OCI-LY7 (cell line): ENCODE measurements at regions of chr6 and their contacts with region 1.

Region 1: DNA sequence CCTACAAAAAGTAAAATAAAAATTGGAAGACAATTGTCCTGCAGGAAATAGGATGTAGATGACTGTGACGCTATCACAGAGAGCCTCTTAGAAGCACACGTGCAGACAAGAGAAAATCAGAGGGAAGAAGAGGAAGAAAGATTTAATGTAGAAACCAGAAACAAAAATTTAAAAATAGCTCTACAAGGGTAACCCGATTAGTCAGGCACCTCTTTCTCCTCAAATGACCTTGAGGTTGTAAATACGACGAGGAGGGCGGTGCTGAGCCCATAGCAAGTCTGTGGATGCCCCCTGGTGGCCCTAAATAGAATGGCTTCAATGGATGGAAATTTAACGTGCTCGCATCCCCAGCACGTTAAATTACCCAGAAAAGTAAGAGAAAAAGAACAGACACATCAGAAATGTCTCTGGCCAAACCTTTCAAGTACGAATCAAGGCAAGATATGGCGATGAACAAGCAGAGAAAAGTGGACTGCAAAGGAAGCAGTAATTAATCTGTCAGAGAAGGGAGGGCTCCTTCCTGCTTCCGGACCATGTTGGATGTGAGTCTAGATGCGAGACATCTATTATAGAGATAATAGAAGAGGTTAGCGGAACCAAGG is 4.2 kb upstream of the PRPH2 start:
- DNase-seq: peak; percentile 91
- H3K4me3 ChIP-seq: peak overlapping the region; percentile 31
- H3K27ac ChIP-seq: peak overlapping the region; percentile 50
- H3K4me1 ChIP-seq: peaks cover 16% of the 10 kb centered on the region
- CTCF ChIP-seq: peak; percentile 98

Region 2: DNA sequence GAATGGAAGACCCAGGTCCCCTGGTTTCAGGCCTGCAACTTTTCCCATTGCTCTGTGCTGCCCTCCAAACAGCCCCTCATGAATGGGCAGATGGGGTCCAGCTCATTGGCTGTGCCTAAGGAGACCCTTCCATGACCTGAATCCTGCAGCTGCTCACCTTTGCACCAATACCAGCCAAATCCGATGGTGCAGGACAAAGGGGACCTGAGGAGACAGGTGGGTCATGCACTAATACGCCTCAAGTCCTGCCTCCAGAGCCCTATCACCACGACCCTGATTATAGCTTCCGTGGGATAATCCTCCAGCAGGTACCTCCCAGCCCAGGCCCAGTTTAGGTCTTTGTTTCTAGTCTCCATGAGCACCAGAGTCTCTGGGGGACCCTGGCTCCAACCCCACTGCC is 1456.9 kb before region 1 on chr6:
- CTCF ChIA-PET with region 1: no interaction called
- POLR2A ChIA-PET with region 1: no interaction called
- intact Hi-C with region 1: no loop called
- DNase-seq: no peak
- H3K4me3 ChIP-seq: no peak overlapping the region
- H3K27ac ChIP-seq: no peak overlapping the region
- H3K4me1 ChIP-seq: no peaks in the 10 kb centered on the region
- CTCF ChIP-seq: no peak

Region 3: GRCh38 chr6:42569102-42570028 is 157.2 kb before region 1 on chr6:
- CTCF ChIA-PET with region 1: no interaction called
- POLR2A ChIA-PET with region 1: no interaction called
- intact Hi-C with region 1: loop called (anchors 5 kb)
- DNase-seq: no peak
- H3K4me3 ChIP-seq: no peak overlapping the region
- H3K27ac ChIP-seq: peak overlapping the region; percentile 26
- H3K4me1 ChIP-seq: peaks cover 49% of the 10 kb centered on the region
- CTCF ChIP-seq: peak; percentile 28; the same call in 1 of the 2 replicates

Region 4: GRCh38 chr6:42618686-42619085 is 107.9 kb before region 1 on chr6:
- CTCF ChIA-PET with region 1: no interaction called
- POLR2A ChIA-PET with region 1: interaction called, 14 read pairs
- intact Hi-C with region 1: no loop called
- DNase-seq: no peak
- H3K4me3 ChIP-seq: no peak overlapping the region
- H3K27ac ChIP-seq: no peak overlapping the region
- H3K4me1 ChIP-seq: no peaks in the 10 kb centered on the region
- CTCF ChIP-seq: no peak

Region 5: GRCh38 chr6:42661540-42662153 is 64.9 kb before region 1 on chr6:
- CTCF ChIA-PET with region 1: interaction called, 3 read pairs
- POLR2A ChIA-PET with region 1: interaction called, 6 read pairs
- intact Hi-C with region 1: loop called (anchors 1 kb)
- DNase-seq: peak; percentile 81
- H3K4me3 ChIP-seq: no peak overlapping the region
- H3K27ac ChIP-seq: no peak overlapping the region
- H3K4me1 ChIP-seq: no peaks in the 10 kb centered on the region
- CTCF ChIP-seq: peak; percentile 100

Region 6: GRCh38 chr6:42813906-42814444 is 87.4 kb after region 1 on chr6:
- CTCF ChIA-PET with region 1: no interaction called
- POLR2A ChIA-PET with region 1: no interaction called
- intact Hi-C with region 1: no loop called
- DNase-seq: no peak
- H3K4me3 ChIP-seq: no peak overlapping the region
- H3K27ac ChIP-seq: no peak overlapping the region
- H3K4me1 ChIP-seq: no peaks in the 10 kb centered on the region
- CTCF ChIP-seq: no peak